Activated CD4-positive, alpha-beta T cell treated with anti-CD3 and anti-CD28 coated beads for 36 hours (primary cell): ENCODE measurements at regions of chr2 and their contacts with region 1.

Region 1: GRCh38 chr2:108786354-108787199 is at the start of gene CCDC138:
- DNase-seq: peak; percentile 96
- ATAC-seq: peak; percentile 98
- H3K4me3 Mint-ChIP-seq: peak within 1 kb of the TSS; percentile 76
- H3K27ac Mint-ChIP-seq: peak within 1 kb of the TSS; percentile 95
- H3K4me1 Mint-ChIP-seq: peaks cover 14% of the 10 kb centered on the region
- H3K27me3 Mint-ChIP-seq: no peaks in the 10 kb centered on the region
- total RNA-seq, gene CCDC138: 14.3 to 15.3 TPM

Region 2: GRCh38 chr2:108533832-108534583 is 252.6 kb before region 1 on chr2 and contains the start of gene LIMS1:
- CTCF ChIA-PET with region 1: no interaction called
- POLR2A ChIA-PET with region 1: no interaction called
- intact Hi-C with region 1: loop called in 1 of 2 experiments (anchors 1 kb)
- DNase-seq: peak; percentile 95
- ATAC-seq: peak; percentile 89
- H3K4me3 Mint-ChIP-seq: peak within 1 kb of the TSS; percentile 89
- H3K27ac Mint-ChIP-seq: peak within 1 kb of the TSS; percentile 89
- H3K4me1 Mint-ChIP-seq: peaks cover 44% of the 10 kb centered on the region
- H3K27me3 Mint-ChIP-seq: no peaks in the 10 kb centered on the region
- total RNA-seq, gene LIMS1: 47.5 to 70.3 TPM

Region 3: DNA sequence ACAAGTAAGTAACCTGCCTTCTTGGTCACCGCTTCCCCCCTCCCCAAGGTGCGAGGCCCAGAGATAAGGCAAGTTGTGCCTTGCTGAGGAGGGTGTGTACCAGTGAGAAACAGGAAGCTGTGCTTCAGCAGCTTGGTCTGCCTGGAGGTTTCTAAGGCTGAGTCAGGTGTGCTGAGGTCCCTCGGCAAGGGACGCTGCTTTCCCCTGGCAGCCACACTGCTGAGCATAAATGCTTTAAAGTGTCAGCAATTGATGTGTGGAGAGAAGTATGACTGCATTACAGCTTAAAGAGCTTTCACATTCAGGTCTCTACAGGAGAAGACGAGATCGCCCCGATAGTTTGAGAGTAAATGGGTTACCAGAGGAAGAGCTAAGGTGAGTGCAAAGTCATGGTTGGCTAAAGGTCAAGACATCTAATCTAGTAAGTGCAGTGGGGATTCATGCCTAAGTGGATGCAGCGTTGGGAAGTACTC is 165.5 kb before region 1 on chr2:
- CTCF ChIA-PET with region 1: no interaction called
- POLR2A ChIA-PET with region 1: no interaction called
- intact Hi-C with region 1: loop called in 1 of 2 experiments (anchors 5 kb)
- DNase-seq: peak; percentile 87
- ATAC-seq: peak; percentile 95
- H3K4me3 Mint-ChIP-seq: peak overlapping the region; percentile 76
- H3K27ac Mint-ChIP-seq: peak overlapping the region; percentile 91
- H3K4me1 Mint-ChIP-seq: peaks cover 85% of the 10 kb centered on the region
- H3K27me3 Mint-ChIP-seq: no peaks in the 10 kb centered on the region

Region 4: DNA sequence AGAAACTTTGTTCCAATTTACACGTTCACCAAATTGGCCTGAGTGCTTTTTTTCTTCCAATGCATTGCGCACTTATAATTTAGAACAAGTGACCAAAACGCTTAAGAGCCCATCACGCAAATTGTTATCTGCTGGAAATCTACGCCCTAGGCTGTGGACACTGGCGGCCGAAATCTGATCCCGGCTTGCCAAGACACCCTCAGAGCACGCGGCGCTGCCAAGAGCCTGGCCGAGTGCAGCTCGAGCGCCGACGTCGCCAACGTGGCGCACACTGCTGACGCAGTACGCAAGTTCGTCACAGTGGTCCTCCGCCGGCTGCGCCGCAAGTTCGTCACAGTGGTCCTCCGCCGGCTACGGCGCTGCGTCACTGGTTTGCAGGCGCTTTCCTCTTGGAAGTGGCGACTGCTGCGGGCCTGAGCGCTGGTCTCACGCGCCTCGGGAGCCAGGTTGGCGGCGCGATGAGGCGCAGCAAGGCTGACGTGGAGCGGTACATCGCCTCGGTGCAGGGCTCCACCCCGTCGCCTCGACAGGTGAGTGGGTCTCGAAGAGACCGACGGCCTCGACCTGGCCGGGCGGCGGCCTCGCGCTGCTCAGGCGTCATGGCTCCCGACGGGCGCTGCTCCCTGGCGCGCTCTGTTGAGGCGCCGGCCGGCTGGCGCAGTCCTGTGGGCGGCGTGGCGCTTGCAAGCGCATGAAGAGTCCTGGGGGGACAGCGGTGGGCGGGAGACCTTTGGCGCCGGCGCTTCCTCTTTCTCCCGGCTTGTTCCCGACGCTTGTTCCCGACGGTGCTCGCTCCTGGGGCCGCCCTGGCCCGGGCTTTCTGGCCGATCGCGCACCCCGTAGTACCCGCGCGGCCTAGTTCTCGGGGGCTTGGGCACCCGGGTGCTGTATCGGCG is 67.2 kb before region 1 on chr2 and contains the start of gene RANBP2:
- CTCF ChIA-PET with region 1: no interaction called
- POLR2A ChIA-PET with region 1: no interaction called
- intact Hi-C with region 1: loop called in 1 of 2 experiments (anchors 1 kb)
- DNase-seq: peak; percentile 97
- ATAC-seq: peak; percentile 97
- H3K4me3 Mint-ChIP-seq: peak within 1 kb of the TSS; percentile 93
- H3K27ac Mint-ChIP-seq: peak within 1 kb of the TSS; percentile 98
- H3K4me1 Mint-ChIP-seq: peaks cover 15% of the 10 kb centered on the region
- H3K27me3 Mint-ChIP-seq: no peaks in the 10 kb centered on the region
- total RNA-seq, gene RANBP2: 68.1 to 77.1 TPM

Region 5: GRCh38 chr2:108805782-108806181 is 19.2 kb after region 1 on chr2:
- CTCF ChIA-PET with region 1: no interaction called
- POLR2A ChIA-PET with region 1: no interaction called
- intact Hi-C with region 1: no loop called
- DNase-seq: no peak
- ATAC-seq: no peak
- H3K4me3 Mint-ChIP-seq: no peak overlapping the region
- H3K27ac Mint-ChIP-seq: no peak overlapping the region
- H3K4me1 Mint-ChIP-seq: no peaks in the 10 kb centered on the region
- H3K27me3 Mint-ChIP-seq: no peaks in the 10 kb centered on the region

Region 6: DNA sequence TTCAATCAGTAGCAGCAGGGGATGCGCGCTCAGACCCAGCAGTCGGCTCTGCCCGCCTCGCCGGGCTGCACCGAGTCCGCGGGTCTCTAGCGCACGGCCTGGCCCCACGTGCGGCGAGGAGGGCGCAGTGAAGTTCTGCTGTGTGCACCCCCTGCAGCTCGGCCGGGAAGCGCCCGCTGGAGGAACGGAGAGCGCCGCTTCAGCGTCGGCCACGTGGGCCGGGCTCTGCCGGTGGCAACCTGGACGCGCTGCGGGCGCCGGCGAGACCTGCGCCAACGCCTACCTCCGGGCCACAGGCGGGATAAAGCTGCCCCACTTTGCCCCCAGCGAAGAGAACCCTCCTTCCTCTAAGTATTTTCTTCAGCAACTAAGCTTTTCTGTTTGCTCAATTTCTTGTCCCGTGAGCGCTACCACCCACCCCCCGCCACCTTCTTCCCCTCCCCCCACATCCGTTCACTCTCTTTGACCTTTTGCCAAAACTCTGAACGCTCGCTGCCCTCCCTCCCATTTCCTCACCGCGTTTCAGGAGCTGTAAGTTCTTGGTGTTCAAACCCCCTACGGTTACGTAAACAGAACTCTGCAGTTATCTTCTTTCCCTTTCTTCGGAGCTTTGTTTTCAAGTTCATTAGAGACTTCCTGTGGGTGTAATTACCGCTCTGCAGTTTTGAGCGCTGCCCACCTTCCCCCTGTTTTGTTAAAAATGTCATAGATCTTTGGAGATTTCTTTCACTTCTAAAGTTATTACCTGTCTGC is 245.1 kb after region 1 on chr2:
- CTCF ChIA-PET with region 1: no interaction called
- POLR2A ChIA-PET with region 1: no interaction called
- intact Hi-C with region 1: loop called in 1 of 2 experiments (anchors 2 kb)
- DNase-seq: peak; percentile 77
- ATAC-seq: peak; percentile 63
- H3K4me3 Mint-ChIP-seq: peak overlapping the region; percentile 71
- H3K27ac Mint-ChIP-seq: peak overlapping the region; percentile 86
- H3K4me1 Mint-ChIP-seq: peaks cover 61% of the 10 kb centered on the region
- H3K27me3 Mint-ChIP-seq: no peaks in the 10 kb centered on the region